ENCODE measurements at regions of chr2 and their contacts with region 1.

Region 1: DNA sequence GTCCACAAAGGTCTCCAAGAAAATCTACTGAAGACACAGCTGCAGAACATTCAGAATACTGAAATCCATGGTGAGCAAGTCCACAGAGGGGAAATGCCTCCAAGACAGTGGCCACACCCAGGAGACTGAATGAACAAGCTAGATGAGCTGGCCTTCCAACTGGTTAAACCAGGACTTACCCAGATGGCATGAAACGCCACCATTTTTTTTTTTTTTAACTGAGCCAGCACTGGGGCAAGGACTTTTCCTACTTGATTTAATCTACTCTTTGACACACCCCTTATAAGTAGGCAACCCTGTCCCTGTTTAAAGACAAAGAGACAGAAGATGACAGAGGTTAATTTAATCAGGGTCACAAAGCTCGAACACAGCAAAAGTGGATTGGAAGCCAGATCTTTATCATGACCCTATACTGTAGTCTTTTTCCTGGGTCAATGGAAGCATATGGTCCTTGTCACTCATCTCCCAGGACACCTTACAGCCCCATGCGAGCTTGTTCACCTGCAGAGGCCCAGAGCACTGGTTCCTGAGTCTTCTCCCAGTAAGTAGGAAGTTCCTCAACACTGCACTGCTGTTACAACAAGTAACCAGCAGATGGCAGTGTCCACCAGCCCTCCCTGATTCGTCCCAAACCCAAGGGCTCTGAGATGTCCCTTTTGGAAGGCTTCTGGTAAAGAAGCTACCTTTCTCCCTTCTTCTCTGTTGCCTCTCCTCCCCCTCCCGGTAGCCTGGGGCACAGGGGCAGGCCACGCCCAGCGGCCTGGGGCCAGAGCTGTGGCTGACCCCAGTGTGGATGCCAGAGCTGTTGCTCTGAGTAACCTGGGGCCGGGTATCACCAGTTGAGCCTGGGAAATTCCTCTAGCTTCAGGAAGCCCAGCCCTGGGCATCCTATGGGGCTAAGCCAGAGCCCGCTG is 5.6 kb upstream of the GDF7 start:
- DNase-seq: peak; percentile 83 to 86
- ATAC-seq: peak; percentile 57 to 79
- H3K4me3 ChIP-seq: no peak overlapping the region
- H3K27ac ChIP-seq: no peak overlapping the region
- H3K4me1 ChIP-seq: peaks cover 13% of the 10 kb centered on the region; the same call in 2 of the 3 replicates
- CTCF ChIP-seq: peak; percentile 97
- EP300 ChIP-seq: no peak
- POLR2A ChIP-seq: no peak
- RAD21 ChIP-seq: peak; percentile 97 to 99

Region 2: DNA sequence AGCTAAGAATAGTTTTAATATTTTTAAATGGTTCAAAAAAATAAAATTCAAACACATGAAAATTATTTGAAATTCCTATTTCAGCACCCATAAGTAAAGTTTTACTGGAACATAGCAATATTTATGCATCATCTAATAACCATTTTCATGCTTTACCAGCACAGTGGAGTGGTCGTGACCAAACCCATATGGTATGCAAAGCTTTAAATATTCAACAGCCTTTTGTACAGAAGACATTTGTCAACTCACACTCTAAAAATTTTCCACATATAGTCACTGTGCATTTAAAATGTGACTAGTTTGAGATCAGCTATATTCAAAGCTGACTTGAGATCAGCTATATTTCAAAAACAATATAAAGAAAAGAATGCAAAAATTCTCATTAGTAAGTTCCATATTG is 356.9 kb before region 1 on chr2:
- CTCF ChIA-PET with region 1: no interaction called
- POLR2A ChIA-PET with region 1: no interaction called
- DNase-seq: no peak
- ATAC-seq: no peak
- H3K4me3 ChIP-seq: no peak overlapping the region
- H3K27ac ChIP-seq: no peak overlapping the region
- H3K4me1 ChIP-seq: no peaks in the 10 kb centered on the region
- CTCF ChIP-seq: no peak
- EP300 ChIP-seq: no peak
- POLR2A ChIP-seq: no peak
- RAD21 ChIP-seq: no peak

Region 3: GRCh38 chr2:20650880-20651730 is 10.2 kb before region 1 on chr2 and contains the start of gene HS1BP3:
- CTCF ChIA-PET with region 1: interaction called, 171 read pairs
- POLR2A ChIA-PET with region 1: interaction called, 5 read pairs
- DNase-seq: peak; percentile 82 to 85
- ATAC-seq: peak; percentile 82 to 97
- H3K4me3 ChIP-seq: peak within 1 kb of the TSS; percentile 89
- H3K27ac ChIP-seq: peak within 1 kb of the TSS; percentile 94
- H3K4me1 ChIP-seq: peaks cover 12% of the 10 kb centered on the region; the same call in 2 of the 3 replicates
- CTCF ChIP-seq: peak; percentile 99
- EP300 ChIP-seq: no peak
- POLR2A ChIP-seq: peak; percentile 92
- RAD21 ChIP-seq: peak; percentile 53 to 84
- polyA plus RNA-seq, gene HS1BP3: 12.4 and 13.8 TPM in 2 replicates

Region 4: DNA sequence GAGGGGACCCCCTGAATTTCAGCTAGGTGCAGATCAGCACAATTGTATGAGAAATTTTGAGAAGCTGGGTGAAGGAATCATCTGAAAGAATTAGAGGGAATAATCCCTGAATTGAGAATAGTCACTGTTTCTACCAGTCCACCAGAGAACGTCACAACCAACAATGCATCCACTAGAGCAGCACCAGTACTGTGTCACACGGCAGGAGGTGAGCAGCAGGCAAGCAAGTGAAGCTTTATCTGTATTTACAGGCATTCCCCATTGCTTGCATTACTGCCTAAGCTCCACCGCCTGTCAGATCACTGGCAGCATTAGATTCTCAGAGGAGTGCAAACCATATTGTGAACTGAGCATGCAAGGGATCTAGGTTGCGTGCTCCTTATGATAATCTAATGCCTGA is 46.3 kb after region 1 on chr2:
- CTCF ChIA-PET with region 1: interaction called, 10 read pairs
- POLR2A ChIA-PET with region 1: no interaction called
- DNase-seq: no peak
- ATAC-seq: no peak
- H3K4me3 ChIP-seq: no peak overlapping the region
- H3K27ac ChIP-seq: no peak overlapping the region
- H3K4me1 ChIP-seq: no peaks in the 10 kb centered on the region
- CTCF ChIP-seq: no peak
- EP300 ChIP-seq: no peak
- POLR2A ChIP-seq: no peak
- RAD21 ChIP-seq: no peak

Region 5: GRCh38 chr2:20822535-20823490 is 161.5 kb after region 1 on chr2 and contains the start of gene LDAH:
- CTCF ChIA-PET with region 1: interaction called, 18 read pairs
- POLR2A ChIA-PET with region 1: no interaction called
- DNase-seq: peak; percentile 91 to 93
- ATAC-seq: peak; percentile 92 to 94
- H3K4me3 ChIP-seq: peak within 1 kb of the TSS; percentile 90
- H3K27ac ChIP-seq: peak within 1 kb of the TSS; percentile 91 to 93
- H3K4me1 ChIP-seq: no peaks in the 10 kb centered on the region
- CTCF ChIP-seq: no peak
- EP300 ChIP-seq: no peak
- POLR2A ChIP-seq: peak; percentile 78
- RAD21 ChIP-seq: no peak
- polyA plus RNA-seq, gene LDAH: 42.4 and 53.6 TPM in 2 replicates

Region 6: DNA sequence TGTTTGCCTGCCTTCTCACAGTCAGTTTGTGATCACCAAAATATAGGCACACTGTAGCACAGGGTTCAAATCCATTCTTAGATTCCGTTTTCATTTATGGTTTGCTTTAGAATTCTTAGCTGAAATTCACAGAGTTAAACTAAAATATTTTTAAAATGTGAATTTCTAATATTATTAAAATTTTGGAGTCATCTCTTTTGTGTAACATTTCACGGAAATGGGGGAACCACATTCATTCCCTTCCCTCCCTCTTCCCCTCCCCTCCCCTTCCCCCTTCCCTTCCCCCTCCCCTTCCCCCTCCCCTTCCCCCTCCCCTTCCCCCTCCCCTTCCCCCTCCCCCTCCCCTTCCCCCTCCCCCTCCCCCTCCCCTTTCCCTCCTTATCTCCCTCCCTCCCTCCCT is 173.0 kb after region 1 on chr2:
- CTCF ChIA-PET with region 1: no interaction called
- POLR2A ChIA-PET with region 1: no interaction called
- DNase-seq: no peak
- ATAC-seq: no peak
- H3K4me3 ChIP-seq: no peak overlapping the region
- H3K27ac ChIP-seq: no peak overlapping the region
- H3K4me1 ChIP-seq: no peaks in the 10 kb centered on the region
- CTCF ChIP-seq: no peak
- EP300 ChIP-seq: no peak
- POLR2A ChIP-seq: no peak
- RAD21 ChIP-seq: no peak

Region 7: DNA sequence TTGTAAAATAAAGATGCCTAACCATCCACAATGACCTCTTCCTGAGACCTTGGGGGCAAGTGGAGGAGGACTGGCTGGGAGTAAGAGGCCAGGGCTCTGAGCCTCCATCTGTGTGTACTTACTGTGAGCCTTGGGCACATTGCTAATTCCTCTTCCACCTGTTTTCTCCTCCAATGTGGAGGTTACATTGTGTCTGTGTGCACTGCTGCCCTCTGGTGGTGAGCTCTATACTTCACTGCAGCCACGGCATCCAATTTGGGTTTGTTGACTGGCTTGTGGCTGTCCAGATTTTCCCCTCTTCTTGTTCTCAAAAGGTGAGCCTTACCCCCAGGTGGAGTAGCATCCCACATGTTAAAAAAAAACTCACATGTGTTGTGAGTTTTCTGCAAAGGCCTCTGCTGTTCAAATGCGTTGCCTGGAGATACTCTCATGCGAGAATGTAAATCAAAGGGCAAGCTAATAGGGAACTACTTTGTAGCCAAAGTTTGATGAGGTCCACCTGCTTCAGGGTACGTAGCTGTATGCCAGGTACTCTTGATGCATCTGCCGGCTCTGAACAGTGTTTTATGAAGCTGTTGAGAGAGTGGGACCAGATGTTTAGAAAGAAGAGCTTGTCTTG is 301.7 kb after region 1 on chr2:
- CTCF ChIA-PET with region 1: interaction called, 352 read pairs
- POLR2A ChIA-PET with region 1: interaction called, 7 read pairs
- DNase-seq: peak; percentile 45 to 67
- ATAC-seq: peak; percentile 85 to 93
- H3K4me3 ChIP-seq: no peak overlapping the region
- H3K27ac ChIP-seq: no peak overlapping the region
- H3K4me1 ChIP-seq: no peaks in the 10 kb centered on the region
- CTCF ChIP-seq: peak; percentile 93
- EP300 ChIP-seq: no peak
- POLR2A ChIP-seq: no peak
- RAD21 ChIP-seq: peak; percentile 82 to 84

Region 8: DNA sequence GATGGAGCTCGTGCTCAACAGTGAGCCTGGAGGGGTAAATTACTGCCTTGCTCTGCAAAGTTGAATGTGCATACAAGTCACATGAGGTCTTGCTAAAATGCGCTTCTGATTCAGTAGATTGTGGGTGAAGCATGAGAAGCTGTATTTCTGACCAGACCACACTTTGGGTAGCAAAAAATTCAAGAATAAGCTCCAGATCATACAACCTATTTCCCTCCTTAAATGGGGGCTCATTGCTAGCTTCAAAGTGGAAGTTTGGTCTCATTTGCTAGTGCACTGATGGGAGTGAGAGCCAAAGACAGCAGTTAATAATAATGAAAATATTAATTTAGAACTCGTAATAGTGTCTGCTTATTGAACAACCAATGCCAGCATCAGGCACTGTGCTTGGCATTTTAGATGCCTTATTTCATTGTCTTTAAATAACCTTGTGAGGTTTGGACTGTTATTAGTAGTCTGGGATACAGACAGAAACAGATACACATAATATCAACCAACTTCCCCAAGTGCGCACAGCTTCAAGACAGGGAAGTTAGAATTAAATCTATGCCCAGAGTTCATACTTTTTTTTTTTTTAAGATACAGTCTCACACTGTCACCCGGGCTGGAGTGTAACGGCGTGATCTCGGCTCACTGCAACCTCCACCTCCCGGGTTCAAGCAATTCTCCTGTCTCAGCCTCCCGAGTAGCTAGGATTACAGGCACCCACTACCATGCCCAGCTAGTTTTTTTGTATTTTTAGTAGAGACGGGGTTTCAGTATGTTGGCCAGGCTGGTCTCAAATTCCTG is 364.6 kb after region 1 on chr2:
- CTCF ChIA-PET with region 1: interaction called, 52 read pairs
- POLR2A ChIA-PET with region 1: no interaction called
- DNase-seq: no peak
- ATAC-seq: no peak
- H3K4me3 ChIP-seq: no peak overlapping the region
- H3K27ac ChIP-seq: no peak overlapping the region
- H3K4me1 ChIP-seq: no peaks in the 10 kb centered on the region
- CTCF ChIP-seq: no peak
- EP300 ChIP-seq: no peak
- POLR2A ChIP-seq: no peak
- RAD21 ChIP-seq: no peak

Region 9: DNA sequence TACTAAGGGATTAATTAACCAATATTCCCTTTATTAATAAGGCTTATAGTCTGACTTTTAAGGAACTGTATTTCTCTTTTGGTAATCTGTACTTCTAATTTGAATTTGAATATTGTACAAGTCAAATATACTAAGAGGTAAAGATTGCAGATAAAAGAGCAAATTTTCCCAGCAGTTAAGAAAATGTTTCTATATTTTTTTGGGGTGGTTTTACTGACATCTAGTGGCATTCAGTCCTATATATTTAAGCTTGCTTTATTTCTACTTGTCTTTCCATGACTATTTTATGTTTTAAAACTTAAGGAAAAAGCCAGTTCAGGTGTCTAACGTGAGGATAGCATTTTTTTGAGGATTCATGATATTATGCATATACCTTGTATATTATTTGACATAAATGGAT is 504.0 kb after region 1 on chr2:
- CTCF ChIA-PET with region 1: interaction called, 11 read pairs
- POLR2A ChIA-PET with region 1: no interaction called
- DNase-seq: no peak
- ATAC-seq: no peak
- H3K4me3 ChIP-seq: no peak overlapping the region
- H3K27ac ChIP-seq: no peak overlapping the region
- H3K4me1 ChIP-seq: no peaks in the 10 kb centered on the region
- CTCF ChIP-seq: peak; percentile 28; the same call in 2 of the 3 replicates
- EP300 ChIP-seq: no peak
- POLR2A ChIP-seq: no peak
- RAD21 ChIP-seq: peak in 1 of 2 experiments; percentile 32; a peak in 2 of 5 replicates